ENCODE measurements at regions of chr3 and their contacts with region 1.

Region 1: GRCh38 chr3:130759699-130760338 is 13.2 kb upstream of the PIK3R4 start:
- DNase-seq: peak; percentile 15
- H3K4me3 ChIP-seq: no peak overlapping the region
- H3K27ac ChIP-seq: no peak overlapping the region
- H3K27me3 ChIP-seq: peaks cover 2% of the 10 kb centered on the region
- CTCF ChIP-seq: peak; percentile 88

Region 2: DNA sequence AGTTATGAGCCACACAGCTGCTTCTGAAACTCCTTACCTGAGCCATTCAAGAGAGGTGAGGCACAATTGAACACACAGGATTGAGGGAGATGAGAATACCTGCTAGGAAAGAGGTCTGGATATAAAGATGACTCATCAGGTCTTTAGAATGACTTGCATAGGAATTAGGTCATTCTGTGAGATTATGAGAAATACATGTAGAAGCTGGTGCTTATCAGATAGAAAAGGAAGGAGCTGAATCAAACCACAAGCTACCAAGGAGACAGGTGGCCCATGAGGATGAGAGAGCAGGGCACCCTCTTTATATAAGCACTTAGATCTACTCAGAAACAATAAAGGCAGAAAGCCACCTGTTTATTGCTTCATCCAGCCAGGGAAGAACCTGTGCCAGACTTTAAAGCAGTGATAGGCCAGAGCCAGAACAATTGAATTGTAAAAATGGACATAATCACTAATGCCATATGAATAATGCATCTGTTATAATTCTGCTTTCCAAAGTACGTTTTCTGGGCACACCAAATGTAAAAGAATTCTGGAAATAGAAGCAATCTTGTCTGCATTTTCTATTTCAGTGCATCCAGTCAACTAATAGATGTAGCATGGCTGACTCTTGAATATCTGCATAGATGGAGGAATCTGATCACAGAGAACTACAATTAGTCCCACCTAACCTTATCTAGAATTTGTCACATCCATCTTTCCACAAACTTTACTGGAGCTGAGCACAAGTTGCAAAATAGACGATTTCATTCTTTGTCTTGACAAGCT is 88.1 kb before region 1 on chr3:
- CTCF ChIA-PET with region 1: no interaction called
- POLR2A ChIA-PET with region 1: no interaction called
- DNase-seq: no peak
- H3K4me3 ChIP-seq: no peak overlapping the region
- H3K27ac ChIP-seq: no peak overlapping the region
- H3K27me3 ChIP-seq: no peaks in the 10 kb centered on the region
- CTCF ChIP-seq: no peak

Region 3: GRCh38 chr3:130746246-130747039 is 13.4 kb before region 1 on chr3 and contains the start of gene PIK3R4:
- CTCF ChIA-PET with region 1: interaction called, 50 read pairs
- POLR2A ChIA-PET with region 1: no interaction called
- DNase-seq: peak; percentile 92
- H3K4me3 ChIP-seq: peak within 1 kb of the TSS; percentile 97
- H3K27ac ChIP-seq: peak within 1 kb of the TSS; percentile 77
- H3K27me3 ChIP-seq: no peaks in the 10 kb centered on the region
- CTCF ChIP-seq: no peak
- polyA plus RNA-seq, gene PIK3R4: 23.5 and 25.6 TPM in 2 replicates

Region 4: GRCh38 chr3:130773366-130773765 is 13.5 kb after region 1 on chr3:
- CTCF ChIA-PET with region 1: interaction called, 12 read pairs
- POLR2A ChIA-PET with region 1: no interaction called
- DNase-seq: no peak
- H3K4me3 ChIP-seq: no peak overlapping the region
- H3K27ac ChIP-seq: no peak overlapping the region
- H3K27me3 ChIP-seq: no peaks in the 10 kb centered on the region
- CTCF ChIP-seq: no peak